ENCODE measurements at regions of chr20 and their contacts with region 1.

Region 1: DNA sequence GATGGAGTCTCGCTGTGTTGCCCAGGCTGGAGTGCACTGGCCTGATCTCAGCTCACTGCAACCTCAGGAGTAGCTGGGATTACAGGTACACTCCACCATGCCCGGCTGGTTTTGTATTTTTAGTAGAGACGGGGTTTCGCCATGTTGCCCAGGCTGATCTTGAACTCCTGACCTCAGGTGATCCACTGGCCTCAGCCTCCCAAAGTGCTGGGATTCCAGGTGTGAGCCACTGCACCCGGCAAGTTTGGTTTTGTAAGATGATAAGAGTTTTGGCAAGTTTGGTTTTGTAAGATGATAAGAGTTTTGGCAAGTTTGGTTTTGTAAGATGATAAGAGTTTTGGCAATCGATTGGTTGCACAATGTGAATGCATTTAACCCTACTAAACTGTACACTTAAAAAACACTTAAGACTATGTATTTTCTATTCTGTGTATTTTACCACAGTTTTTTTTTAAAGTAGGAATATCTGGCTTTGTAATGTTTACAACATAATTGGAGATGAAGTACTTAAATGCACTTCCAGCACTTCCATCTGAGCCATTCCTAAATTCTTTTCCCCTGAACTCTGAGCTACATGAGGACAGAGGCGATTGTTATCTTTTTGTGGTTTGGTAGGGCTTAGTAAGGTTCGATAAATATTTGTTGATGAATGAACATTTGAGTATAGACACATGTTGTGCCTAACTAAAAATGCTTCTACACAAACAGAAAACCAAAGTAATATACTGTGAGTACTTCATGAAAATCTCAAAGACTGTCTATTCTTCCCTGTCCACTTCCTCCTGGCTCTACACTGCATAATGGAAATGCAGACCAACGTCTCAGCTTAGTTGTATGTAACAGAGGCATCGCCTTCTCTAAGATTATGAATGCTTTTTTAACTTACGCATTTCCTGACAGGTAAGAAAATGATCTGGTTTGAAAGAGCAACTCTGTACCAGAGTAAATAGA is 18.8 kb downstream of the SAMHD1 start:
- DNase-seq: no peak
- H3K4me3 ChIP-seq: no peak overlapping the region
- H3K4me3 Mint-ChIP-seq: peak overlapping the region in 3 of 7 donors; percentile 22 to 50 (median 32)
- H3K27ac ChIP-seq: no peak overlapping the region
- H3K27ac Mint-ChIP-seq: peak overlapping the region; percentile 53 to 97 (median 80)
- H3K4me1 ChIP-seq: peaks cover 63% of the 10 kb centered on the region
- H3K4me1 Mint-ChIP-seq: peaks cover 51 to 68% (median 66%) of the 10 kb centered on the region in 3 donors
- H3K27me3 ChIP-seq: no peaks in the 10 kb centered on the region
- H3K27me3 Mint-ChIP-seq: no peaks in the 10 kb centered on the region

Region 2: DNA sequence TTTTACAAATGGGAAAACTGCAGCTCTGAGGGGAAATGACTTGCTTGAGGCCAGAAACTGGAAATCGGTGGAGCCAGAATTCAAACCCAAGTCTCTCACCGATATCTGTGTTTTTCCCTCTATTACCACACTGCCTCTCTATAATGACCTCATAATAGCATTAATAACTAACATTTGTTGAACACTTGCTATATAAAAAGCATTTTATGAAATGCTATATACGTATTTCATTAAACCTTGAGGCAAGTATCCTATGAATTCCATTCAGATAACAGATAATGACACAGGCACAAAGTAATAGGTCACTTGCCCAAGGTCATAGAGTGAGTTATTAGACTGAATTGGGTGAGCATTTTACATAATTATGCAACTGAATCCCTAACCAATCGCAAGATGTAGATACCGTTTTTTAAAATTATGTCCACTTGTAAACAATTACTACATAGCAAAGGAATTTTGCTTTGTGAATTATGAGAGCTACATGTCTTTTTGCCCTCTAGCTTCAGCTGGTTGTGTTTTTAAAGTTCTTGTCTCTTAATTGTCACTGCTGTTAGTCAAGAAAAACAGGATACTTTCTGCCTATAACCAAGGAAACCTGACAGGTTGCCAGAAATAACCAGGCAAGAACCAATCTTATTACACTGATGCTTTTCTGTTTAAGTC is 163.9 kb before region 1 on chr20:
- CTCF ChIA-PET with region 1: no interaction called
- POLR2A ChIA-PET with region 1: no interaction called
- DNase-seq: no peak
- H3K4me3 ChIP-seq: no peak overlapping the region
- H3K4me3 Mint-ChIP-seq: peak overlapping the region in 1 of 7 donors; percentile 35
- H3K27ac ChIP-seq: no peak overlapping the region
- H3K27ac Mint-ChIP-seq: peak overlapping the region in 1 of 8 donors; percentile 32
- H3K4me1 ChIP-seq: peaks cover 7% of the 10 kb centered on the region
- H3K4me1 Mint-ChIP-seq: peaks cover 12 to 36% (median 23%) of the 10 kb centered on the region in 3 donors
- H3K27me3 ChIP-seq: no peaks in the 10 kb centered on the region
- H3K27me3 Mint-ChIP-seq: peaks cover 0 to 3% of the 10 kb centered on the region in 2 donors

Region 3: GRCh38 chr20:36919715-36920333 is 12.9 kb before region 1 on chr20:
- CTCF ChIA-PET with region 1: interaction called, 11 read pairs
- POLR2A ChIA-PET with region 1: interaction called, 3 read pairs
- DNase-seq: peak in 3 of 5 donors; percentile 6 to 57 (median 40)
- H3K4me3 ChIP-seq: no peak overlapping the region
- H3K4me3 Mint-ChIP-seq: no peak overlapping the region
- H3K27ac ChIP-seq: no peak overlapping the region
- H3K27ac Mint-ChIP-seq: peak overlapping the region in 6 of 8 donors; percentile 13 to 92 (median 88)
- H3K4me1 ChIP-seq: peaks cover 24% of the 10 kb centered on the region
- H3K4me1 Mint-ChIP-seq: peaks cover 11 to 25% (median 22%) of the 10 kb centered on the region in 3 donors
- H3K27me3 ChIP-seq: no peaks in the 10 kb centered on the region
- H3K27me3 Mint-ChIP-seq: no peaks in the 10 kb centered on the region

Region 4: DNA sequence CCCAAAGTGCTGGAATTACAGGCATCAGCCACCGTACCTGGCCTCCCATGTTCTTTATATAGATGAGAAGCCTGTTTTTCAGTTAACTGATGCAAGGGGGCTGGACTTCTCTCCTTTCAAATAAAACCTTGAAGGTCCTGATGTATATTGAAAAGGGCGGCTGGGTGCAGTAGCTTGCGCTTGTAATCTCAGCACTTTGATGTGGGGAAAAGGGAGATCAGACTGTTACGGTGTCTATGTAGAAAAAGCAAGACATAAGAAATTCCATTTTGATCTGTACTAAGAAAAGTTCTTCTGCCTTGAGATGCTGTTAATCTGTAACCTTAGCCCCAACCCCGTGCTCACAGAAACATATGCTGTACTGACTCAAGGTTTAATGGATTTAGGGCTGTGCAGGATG is 34.9 kb after region 1 on chr20:
- CTCF ChIA-PET with region 1: no interaction called
- POLR2A ChIA-PET with region 1: no interaction called
- DNase-seq: peak in 1 of 5 donors; percentile 64
- H3K4me3 ChIP-seq: no peak overlapping the region
- H3K4me3 Mint-ChIP-seq: peak overlapping the region in 4 of 7 donors; percentile 10 to 68 (median 46)
- H3K27ac ChIP-seq: no peak overlapping the region
- H3K27ac Mint-ChIP-seq: peak overlapping the region; percentile 71 to 95 (median 86)
- H3K4me1 ChIP-seq: peaks cover 57% of the 10 kb centered on the region
- H3K4me1 Mint-ChIP-seq: peaks cover 41 to 61% (median 60%) of the 10 kb centered on the region in 3 donors
- H3K27me3 ChIP-seq: no peaks in the 10 kb centered on the region
- H3K27me3 Mint-ChIP-seq: peaks cover 0 to 2% of the 10 kb centered on the region in 2 donors